Right cardiac atrium (tissue), 5 donors: ENCODE measurements at regions of chrX and their contacts with region 1.

Region 1: DNA sequence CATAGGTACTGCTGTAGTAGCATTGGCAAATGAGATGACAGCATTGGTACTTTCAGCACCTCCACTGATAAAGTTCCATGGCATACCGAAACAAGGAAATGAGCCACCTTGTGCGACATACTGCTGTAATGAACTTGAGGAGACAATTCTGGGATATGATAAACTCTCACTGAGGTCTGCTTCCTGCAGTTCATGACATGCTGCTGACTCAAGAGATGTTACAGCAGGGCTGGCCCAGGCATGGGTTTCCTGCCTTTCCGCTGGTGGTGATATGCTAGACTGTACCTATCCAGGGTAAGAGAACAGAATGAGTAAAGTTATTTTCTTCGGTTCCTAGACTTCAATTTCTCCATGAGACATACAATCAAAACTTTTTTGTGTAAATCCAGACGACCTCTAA is 17.1 kb downstream of the BEND2 start:
- DNase-seq: no peak
- ATAC-seq: no peak
- H3K4me3 ChIP-seq: no peak overlapping the region
- H3K27ac ChIP-seq: no peak overlapping the region
- H3K4me1 ChIP-seq: no peaks in the 10 kb centered on the region
- H3K27me3 ChIP-seq: no peaks in the 10 kb centered on the region

Region 2: DNA sequence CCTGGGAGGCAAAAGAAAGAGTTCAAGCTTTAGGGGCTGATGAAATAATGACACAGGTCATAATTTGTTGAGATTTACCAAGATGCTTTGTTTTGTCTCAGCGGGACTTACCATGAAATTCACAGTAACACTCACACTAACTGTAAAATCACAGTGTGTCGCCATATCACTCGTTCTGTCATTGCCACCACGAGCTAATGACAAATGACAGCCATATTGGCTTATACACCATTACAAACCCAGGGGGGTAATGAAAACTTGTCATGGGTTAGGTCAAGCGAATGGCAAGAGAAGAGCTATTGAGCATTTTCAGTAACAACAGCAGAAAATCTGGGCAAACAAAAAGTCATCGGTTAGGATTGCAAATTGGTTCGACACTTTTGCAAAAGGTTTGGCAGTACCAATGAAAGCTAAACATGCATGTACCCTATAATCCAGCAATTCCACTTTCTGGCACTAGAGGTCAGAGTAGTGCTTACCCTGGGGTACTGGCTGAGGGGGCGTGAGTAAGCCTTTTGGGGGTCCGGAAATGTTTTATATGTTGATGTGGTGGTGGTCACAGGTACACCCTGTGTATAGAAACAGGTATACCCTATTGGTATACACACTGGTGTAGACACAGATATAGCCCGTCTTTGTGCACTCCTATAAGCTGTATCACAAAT is 258.7 kb before region 1 on chrX:
- intact Hi-C with region 1: loop called in 1 of 4 experiments (anchors 10 kb)
- DNase-seq: no peak
- ATAC-seq: no peak
- H3K4me3 ChIP-seq: no peak overlapping the region
- H3K27ac ChIP-seq: no peak overlapping the region
- H3K4me1 ChIP-seq: no peaks in the 10 kb centered on the region
- H3K27me3 ChIP-seq: no peaks in the 10 kb centered on the region

Region 3: GRCh38 chrX:18017416-18017815 is 186.2 kb before region 1 on chrX:
- intact Hi-C with region 1: no loop called
- DNase-seq: no peak
- ATAC-seq: no peak
- H3K4me3 ChIP-seq: no peak overlapping the region
- H3K27ac ChIP-seq: no peak overlapping the region
- H3K4me1 ChIP-seq: no peaks in the 10 kb centered on the region
- H3K27me3 ChIP-seq: no peaks in the 10 kb centered on the region